Mammary epithelial cell (primary cell): ENCODE measurements at regions of chr11 and their contacts with region 1.

Region 1: DNA sequence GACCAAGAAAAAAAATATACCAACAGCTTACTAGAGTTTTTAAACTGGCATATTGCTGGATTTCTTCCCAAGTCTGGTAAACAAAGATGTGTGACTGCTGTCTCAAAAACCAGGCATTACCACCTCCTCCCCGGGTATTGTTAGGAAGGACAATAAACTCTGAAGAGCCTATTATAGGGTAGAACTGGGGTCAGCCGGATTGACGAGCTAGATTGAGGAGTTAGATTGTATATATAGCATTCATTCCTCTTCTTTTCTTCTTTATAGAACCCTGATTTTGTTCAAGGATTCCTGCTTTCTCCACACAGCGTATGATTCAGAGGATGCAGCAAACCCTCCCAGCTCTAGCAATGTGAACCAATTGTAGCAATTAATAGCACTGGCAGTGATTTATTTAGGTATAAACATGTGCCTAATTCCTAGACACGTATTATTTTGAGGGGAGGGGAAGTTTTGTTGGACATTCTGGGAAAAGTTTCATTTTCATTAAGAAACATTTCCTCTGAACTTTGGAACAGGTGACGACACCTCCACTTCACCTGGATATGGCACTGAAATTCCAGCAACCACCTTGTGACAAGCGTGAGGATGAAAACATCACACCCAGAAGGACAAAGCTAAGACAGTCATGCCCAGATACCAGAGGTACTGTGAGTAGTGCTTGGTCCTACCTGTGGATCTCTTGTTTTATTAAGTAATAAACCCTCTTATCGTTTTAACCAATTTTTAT is 679.4 kb upstream of the KIRREL3 start:
- DNase-seq: no peak
- H3K4me3 ChIP-seq: no peak overlapping the region
- H3K27ac ChIP-seq: no peak overlapping the region
- H3K4me1 ChIP-seq: no peaks in the 10 kb centered on the region
- H3K27me3 ChIP-seq: no peaks in the 10 kb centered on the region
- CTCF ChIP-seq: no peak

Region 2: DNA sequence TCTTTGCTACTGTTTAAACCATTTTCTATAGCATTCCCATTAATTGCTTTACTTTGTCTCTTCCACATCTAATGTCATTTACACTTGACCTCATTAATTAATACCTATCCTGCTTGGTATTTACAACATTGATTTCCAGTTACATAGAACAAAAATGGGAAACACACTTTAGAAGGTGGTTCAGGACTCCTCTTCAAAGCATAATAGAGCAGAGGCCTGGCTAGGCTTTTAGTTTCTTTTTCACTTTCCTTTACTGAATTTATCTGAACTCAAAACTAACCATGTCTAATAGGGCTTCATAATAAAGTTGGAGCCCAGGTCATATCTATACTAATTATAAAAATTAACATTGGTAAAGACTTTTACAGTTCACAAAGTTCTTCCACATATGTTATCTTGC is 31.4 kb before region 1 on chr11:
- CTCF ChIA-PET with region 1: no interaction called
- dilution Hi-C with region 1: loop called (anchors 5 kb)
- in situ Hi-C with region 1: no loop called
- intact Hi-C with region 1: no loop called
- DNase-seq: no peak
- H3K4me3 ChIP-seq: no peak overlapping the region
- H3K27ac ChIP-seq: no peak overlapping the region
- H3K4me1 ChIP-seq: peaks cover 6% of the 10 kb centered on the region
- H3K27me3 ChIP-seq: no peaks in the 10 kb centered on the region
- CTCF ChIP-seq: no peak